ENCODE measurements at regions of chr14 and their contacts with region 1.

Region 1: DNA sequence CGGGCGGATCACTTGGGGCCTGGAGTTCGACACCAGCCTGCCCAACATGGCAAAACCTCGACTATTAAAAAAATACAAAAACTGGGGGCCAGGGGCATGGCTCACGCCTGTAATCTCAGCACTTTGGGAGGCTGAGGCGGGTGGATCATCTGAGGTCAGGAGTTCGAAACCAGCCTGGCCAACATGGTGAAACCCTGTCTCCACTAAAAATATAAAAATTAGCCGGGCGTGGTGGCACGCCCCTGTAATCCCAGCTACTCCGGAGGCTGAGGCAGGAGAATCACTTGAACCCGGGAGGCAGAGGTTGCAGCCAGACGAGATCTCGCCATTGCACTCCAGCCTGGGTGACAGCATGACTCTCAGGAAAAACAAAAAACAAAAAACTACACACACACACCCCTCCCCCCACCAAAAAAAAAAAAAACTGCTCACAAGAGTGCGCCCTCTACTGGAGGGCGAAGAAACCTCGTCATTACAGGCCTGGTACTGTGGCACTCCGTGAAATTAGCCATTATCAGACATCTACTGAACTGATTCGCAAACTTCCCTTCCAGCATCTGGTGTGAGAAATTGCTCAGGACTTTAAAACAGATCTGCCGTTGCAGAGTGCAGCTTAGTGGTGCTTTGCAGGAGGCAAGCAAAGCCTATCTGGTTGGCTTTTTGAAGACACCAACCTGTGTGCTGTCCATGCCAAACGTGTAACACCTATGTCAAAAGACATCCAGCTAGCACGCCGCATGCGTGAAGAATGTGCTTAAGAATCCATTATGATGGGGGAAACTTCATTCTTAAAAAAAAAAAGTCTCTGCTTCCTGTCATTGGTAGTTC is 7.7 kb downstream of the PPP1R3E start:
- DNase-seq: peak; percentile 77
- ATAC-seq: peak; percentile 75
- H3K4me3 ChIP-seq: no peak overlapping the region
- H3K27ac ChIP-seq: no peak overlapping the region
- H3K4me1 ChIP-seq: peaks cover 24% of the 10 kb centered on the region
- H3K27me3 ChIP-seq: no peaks in the 10 kb centered on the region
- CTCF ChIP-seq: peak; percentile 94
- EP300 ChIP-seq: peak; percentile 20 to 38; a peak in 1 of 4 replicates
- POLR2A ChIP-seq: peak in 1 of 2 experiments; percentile 34; a peak in 1 of 4 replicates
- RAD21 ChIP-seq: 0 out of 2 replicates have a peak, but pooled peaks have one; percentile 33

Region 2: GRCh38 chr14:23306410-23307145 is 11.6 kb after region 1 on chr14 and contains the start of gene BCL2L2:
- CTCF ChIA-PET with region 1: no interaction called
- POLR2A ChIA-PET with region 1: interaction called, 21 read pairs
- in situ Hi-C with region 1: no loop called
- intact Hi-C with region 1: no loop called
- DNase-seq: peak; percentile 98
- ATAC-seq: peak; percentile 76
- H3K4me3 ChIP-seq: peak within 1 kb of the TSS; percentile 95 to 99 (median 96)
- H3K27ac ChIP-seq: peak within 1 kb of the TSS; percentile 87
- H3K4me1 ChIP-seq: peaks cover 60% of the 10 kb centered on the region
- H3K27me3 ChIP-seq: no peaks in the 10 kb centered on the region; a peak in 1 of 5 replicates
- CTCF ChIP-seq: peak; percentile 54
- EP300 ChIP-seq: peak; percentile 69 to 85
- POLR2A ChIP-seq: peak in 1 of 2 experiments; percentile 90; a peak in 2 of 4 replicates
- RAD21 ChIP-seq: no peak
- total RNA-seq, gene BCL2L2: 26.6 and 28.1 TPM in 2 replicates

Measured in HepG2 (cell line).